Activated CD8-positive, alpha-beta T cell treated with anti-CD3 and anti-CD28 coated beads, Interleukin-2, amount 10 ng/mL, durations not matched to agents 7 days and 5 days (primary cell): ENCODE measurements at regions of chr6 and their contacts with region 1.

Region 1: DNA sequence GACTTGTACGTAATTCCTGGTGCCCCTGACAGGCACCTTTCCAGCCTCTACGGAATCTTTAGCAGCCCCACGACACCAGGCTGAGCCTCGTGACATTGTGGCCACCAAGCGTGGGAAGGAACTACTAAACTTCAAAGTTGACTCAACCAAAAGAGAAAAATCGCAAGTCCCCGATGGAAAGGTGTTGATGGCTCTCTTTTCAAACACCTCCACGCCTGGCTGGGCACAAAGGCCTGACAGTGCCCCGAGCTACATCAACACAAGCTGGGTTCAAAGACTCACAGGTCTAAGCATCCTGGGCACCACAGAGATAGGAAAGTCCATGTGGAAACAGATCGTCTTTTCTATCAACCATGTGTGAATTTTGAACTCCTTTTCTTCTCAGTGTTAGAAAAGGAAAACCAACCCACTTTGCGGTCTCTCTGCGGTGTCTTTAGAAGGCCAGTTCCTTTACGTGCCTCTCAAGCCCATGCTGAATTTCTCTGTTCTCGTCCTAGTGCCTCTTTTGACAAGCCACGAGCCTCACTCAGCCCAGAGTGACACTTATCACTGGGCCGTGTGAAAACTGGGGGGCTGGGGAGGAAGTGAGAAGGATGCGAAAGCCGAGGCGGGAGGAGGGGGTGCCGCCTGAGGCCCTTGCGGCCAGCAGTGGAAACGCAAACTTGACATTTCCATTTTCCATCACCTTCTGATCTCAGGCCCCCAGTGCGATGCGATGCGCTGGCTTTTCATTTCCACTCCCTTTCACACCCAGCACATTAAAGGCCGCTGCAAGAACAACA is 59.4 kb downstream of the GFOD1 start:
- DNase-seq: peak; percentile 87
- ATAC-seq: peak; percentile 81
- H3K4me3 Mint-ChIP-seq: peak overlapping the region; percentile 57
- H3K27ac Mint-ChIP-seq: peak overlapping the region; percentile 93
- H3K4me1 Mint-ChIP-seq: peaks cover 74% of the 10 kb centered on the region
- H3K27me3 Mint-ChIP-seq: no peaks in the 10 kb centered on the region

Region 2: DNA sequence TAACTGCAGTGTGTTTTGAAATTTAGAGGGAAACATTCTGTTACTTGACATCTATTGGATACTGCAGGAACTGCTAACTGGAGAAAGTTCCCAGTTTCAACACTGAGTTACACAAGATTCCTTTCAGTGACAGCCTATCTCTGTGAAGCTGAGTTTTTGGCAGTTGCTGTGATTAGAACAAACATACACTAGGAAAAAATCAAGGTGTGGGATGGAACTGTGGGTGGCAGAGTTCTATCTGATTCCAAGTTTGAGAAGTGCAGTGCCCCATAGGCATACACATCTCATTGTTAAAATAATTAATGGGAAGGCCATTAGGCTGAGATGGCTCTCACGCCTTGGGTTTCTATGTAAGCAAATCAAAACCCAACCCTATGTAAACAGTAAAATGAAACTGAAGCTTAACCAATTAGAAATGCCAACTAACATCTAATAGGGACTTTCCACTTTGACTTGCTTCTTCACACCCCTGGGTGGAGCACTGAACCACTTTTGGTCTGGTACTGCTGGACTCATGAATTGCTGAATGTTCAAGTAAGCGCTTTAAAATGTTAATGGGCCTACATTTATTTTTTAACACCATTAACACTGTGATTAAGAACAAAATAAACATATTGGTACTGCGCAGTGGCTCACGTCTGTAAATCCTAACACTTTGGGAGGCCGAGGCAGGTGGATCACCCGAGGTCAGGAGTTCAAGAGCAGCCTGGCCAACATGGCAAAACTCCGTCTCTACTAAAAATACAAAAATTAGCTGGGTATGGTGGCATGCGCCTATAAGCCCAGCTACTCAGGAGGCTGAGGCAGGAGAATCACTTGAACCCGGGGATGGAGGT is 44.4 kb before region 1 on chr6:
- CTCF ChIA-PET with region 1: interaction called, 11 read pairs
- POLR2A ChIA-PET with region 1: interaction called, 3 read pairs
- DNase-seq: no peak
- ATAC-seq: peak; percentile 66
- H3K4me3 Mint-ChIP-seq: no peak overlapping the region
- H3K27ac Mint-ChIP-seq: no peak overlapping the region
- H3K4me1 Mint-ChIP-seq: peaks cover 18% of the 10 kb centered on the region
- H3K27me3 Mint-ChIP-seq: no peaks in the 10 kb centered on the region